Gastrocnemius medialis (tissue), 4 donors: ENCODE measurements at regions of chr17 and their contacts with region 1.

Region 1: DNA sequence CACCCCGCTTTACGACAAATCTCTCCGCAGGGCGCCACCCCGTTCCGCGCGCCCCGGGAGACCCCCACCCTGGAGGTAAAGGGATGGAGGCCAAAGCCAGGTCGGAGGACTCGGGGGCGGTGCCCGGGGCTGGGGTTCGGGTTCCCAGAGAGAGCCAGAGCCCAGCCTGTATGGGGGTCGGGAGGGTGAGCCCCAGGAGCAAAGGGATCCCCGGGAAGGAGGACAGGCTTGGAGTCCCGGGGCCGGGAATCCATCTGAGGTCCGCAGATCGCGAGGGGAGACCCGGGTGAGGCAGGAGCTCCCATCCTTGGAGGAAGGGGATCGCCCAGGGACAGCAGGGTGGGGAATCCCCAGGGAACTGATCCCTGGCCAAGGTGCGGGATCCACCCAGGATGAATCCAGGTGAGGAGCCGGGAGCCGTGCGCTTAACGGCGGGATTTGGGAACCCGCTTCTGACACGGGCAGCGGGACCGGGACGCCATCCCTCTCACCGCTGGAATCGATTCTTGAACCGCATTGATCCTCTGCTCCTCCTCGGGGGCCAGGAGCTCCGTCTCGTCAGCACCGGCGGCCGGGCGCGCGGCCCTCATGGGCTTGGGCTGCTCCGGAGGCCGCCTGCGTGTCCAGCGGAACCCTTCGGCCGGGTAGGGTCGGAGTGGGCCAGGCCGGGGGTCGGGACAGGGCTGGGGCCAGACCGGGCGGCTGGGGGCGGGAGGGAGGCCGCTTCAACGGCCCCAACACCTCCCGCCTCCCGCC is at the start of gene MMD:
- DNase-seq: peak in 1 of 2 donors; percentile 15
- ATAC-seq: peak; percentile 42 to 56
- H3K4me3 ChIP-seq: peak within 1 kb of the TSS; percentile 72 to 89 (median 84)
- H3K27ac ChIP-seq: peak within 1 kb of the TSS; percentile 74 to 84 (median 78)
- H3K4me1 ChIP-seq: peaks cover 5 to 21% of the 10 kb centered on the region in 2 donors
- H3K27me3 ChIP-seq: no peaks in the 10 kb centered on the region
- CTCF ChIP-seq: no peak
- POLR2A ChIP-seq: peak; percentile 70 to 82
- total RNA-seq, gene MMD: 4.6 to 25.7 (median 11.3) TPM

Region 2: DNA sequence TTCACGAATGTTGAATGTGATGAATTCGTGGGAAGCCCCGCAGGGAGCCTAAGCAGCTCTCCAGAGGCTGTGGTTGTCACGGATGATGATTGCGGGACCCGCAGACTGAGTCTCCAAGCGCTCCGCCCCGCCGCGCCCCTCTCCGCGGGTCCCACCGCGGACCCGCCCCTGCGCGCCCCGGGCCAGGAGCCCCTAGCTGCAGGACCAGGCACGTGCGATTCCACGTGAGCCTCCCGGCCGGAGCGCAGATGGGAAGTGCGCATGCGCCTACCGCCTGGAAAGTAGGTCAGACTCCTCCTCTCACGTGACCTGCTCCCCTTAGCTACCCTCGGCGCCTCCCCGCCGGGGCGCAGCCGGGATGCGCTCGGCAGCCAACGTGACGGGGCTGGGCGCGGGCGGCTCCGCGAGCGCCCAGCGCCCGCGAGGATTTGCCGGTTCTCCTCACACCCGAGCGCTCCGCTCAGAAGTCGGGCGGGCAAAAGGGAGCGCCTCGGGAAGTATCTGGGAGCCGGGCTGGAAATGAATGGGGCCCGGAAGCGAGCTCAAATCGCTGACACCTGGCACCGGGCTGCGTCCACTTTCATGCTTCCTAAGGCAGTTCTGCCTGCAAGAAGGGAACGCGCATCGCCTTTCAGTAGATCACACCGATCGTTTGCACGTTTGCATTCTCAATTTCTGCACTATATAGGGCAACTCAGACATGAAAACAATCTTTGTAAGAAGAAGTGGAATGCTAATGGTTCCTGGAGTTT is 183.0 kb before region 1 on chr17:
- in situ Hi-C with region 1: no loop called
- intact Hi-C with region 1: loop called (anchors 5 kb)
- DNase-seq: peak; percentile 86 to 92
- ATAC-seq: peak; percentile 96 to 97
- H3K4me3 ChIP-seq: peak overlapping the region; percentile 56 to 67 (median 61)
- H3K27ac ChIP-seq: peak overlapping the region; percentile 74 to 86 (median 82)
- H3K4me1 ChIP-seq: peaks cover 10 to 11% of the 10 kb centered on the region in 2 donors
- H3K27me3 ChIP-seq: no peaks in the 10 kb centered on the region
- CTCF ChIP-seq: peak in 3 of 5 experiments; percentile 12 to 21 (median 21)
- POLR2A ChIP-seq: peak in 1 of 2 donors; percentile 68

Region 3: DNA sequence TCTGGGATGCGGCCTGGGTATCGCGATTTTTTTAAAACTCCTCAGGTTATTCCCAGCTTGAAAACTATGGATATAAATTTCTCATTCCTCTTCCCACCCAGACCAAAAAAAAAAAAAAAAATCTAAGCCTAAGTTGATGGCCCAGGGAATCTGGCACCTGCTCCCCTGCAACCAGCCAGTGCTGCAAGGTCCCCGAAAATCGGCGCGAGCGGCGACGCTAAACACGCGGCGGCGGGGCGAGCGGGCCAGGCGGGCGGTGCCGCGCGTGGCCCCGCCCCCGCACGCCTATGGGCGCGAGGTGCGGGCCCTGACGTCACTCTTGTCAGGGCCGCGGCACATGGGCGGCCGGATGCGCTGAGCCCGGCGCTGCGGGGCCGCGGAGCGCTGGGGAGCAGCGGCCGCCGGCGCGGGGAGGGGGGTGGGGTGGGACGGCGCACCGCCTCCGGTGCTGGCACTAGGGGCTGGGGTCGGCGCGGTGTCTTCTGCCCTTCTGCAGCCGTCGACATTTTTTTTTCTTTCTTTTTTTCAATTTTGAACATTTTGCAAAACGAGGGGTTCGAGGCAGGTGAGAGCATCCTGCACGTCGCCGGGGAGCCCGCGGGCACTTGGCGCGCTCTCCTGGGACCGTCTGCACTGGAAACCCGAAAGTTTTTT is 156.6 kb before region 1 on chr17 and contains the start of gene HLF:
- in situ Hi-C with region 1: no loop called
- intact Hi-C with region 1: loop called (anchors 10 kb)
- DNase-seq: peak; percentile 59 to 72
- ATAC-seq: peak; percentile 85
- H3K4me3 ChIP-seq: peak within 1 kb of the TSS; percentile 66 to 88 (median 72)
- H3K27ac ChIP-seq: peak within 1 kb of the TSS; percentile 78 to 92 (median 78)
- H3K4me1 ChIP-seq: peaks cover 19 to 29% of the 10 kb centered on the region in 2 donors
- H3K27me3 ChIP-seq: no peaks in the 10 kb centered on the region
- CTCF ChIP-seq: peak in 2 of 5 experiments; percentile 8 to 19
- POLR2A ChIP-seq: peak; percentile 79 to 82
- total RNA-seq, gene HLF: 7.7 to 14.8 (median 10.4) TPM

Region 4: GRCh38 chr17:55452139-55452790 is 30.9 kb after region 1 on chr17:
- in situ Hi-C with region 1: no loop called
- intact Hi-C with region 1: loop called (anchors 1 kb)
- DNase-seq: peak; percentile 25 to 38
- ATAC-seq: peak; percentile 64 to 75
- H3K4me3 ChIP-seq: no peak overlapping the region
- H3K27ac ChIP-seq: peak overlapping the region in 3 of 4 donors; percentile 53 to 72 (median 66)
- H3K4me1 ChIP-seq: peaks cover 12 to 19% of the 10 kb centered on the region in 2 donors
- H3K27me3 ChIP-seq: no peaks in the 10 kb centered on the region
- CTCF ChIP-seq: no peak
- POLR2A ChIP-seq: no peak

Region 5: DNA sequence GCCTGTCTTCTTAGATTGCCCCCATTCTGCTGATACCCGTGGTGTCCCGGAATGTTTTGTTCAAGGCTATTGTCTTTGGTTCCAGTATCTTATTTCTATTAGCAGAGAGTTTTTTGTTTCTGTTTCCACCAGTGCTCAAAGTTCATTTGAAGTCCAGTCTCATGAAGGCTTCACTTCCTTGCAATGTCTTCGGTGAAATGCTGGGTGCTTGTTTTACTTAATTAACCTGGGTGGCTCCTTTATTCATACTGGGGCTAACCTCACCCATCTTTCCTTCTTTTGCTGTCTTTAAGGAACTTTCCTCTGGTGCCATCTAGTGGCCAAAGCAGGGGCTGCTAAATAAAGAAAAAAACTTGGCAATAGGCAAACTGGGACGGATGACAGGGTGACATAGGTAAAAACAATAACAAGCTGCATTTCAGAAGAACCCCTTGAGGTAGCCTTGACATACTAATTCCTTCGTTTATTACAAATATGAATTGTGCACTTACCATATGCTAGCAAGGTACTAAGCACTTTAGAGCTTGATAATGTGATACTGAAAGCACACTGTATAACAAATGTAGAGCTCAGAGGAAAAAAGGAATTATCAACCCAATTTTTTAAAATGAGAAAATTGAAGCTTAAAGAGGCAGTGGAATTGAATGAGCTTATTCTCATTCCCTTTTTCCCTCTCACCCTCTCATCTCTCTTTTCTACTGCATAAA is 92.7 kb after region 1 on chr17:
- in situ Hi-C with region 1: no loop called
- intact Hi-C with region 1: loop called (anchors 1 kb)
- DNase-seq: peak; percentile 33 to 53
- ATAC-seq: peak; percentile 85 to 91
- H3K4me3 ChIP-seq: no peak overlapping the region
- H3K27ac ChIP-seq: no peak overlapping the region
- H3K4me1 ChIP-seq: no peaks in the 10 kb centered on the region
- H3K27me3 ChIP-seq: no peaks in the 10 kb centered on the region
- CTCF ChIP-seq: peak; percentile 76 to 93 (median 85)
- POLR2A ChIP-seq: no peak

Region 6: GRCh38 chr17:56172517-56172982 is 751.2 kb after region 1 on chr17:
- in situ Hi-C with region 1: no loop called
- intact Hi-C with region 1: loop called (anchors 5 kb)
- DNase-seq: peak; percentile 92 to 94
- ATAC-seq: peak; percentile 82 to 89
- H3K4me3 ChIP-seq: no peak overlapping the region
- H3K27ac ChIP-seq: peak overlapping the region; percentile 85 to 93 (median 86)
- H3K4me1 ChIP-seq: peaks cover 34 to 35% of the 10 kb centered on the region in 2 donors
- H3K27me3 ChIP-seq: no peaks in the 10 kb centered on the region
- CTCF ChIP-seq: no peak
- POLR2A ChIP-seq: peak in 1 of 2 donors; percentile 30